Sciatic nerve (tissue), 2 donors: ENCODE measurements at regions of chr21 and their contacts with region 1.

Region 1: DNA sequence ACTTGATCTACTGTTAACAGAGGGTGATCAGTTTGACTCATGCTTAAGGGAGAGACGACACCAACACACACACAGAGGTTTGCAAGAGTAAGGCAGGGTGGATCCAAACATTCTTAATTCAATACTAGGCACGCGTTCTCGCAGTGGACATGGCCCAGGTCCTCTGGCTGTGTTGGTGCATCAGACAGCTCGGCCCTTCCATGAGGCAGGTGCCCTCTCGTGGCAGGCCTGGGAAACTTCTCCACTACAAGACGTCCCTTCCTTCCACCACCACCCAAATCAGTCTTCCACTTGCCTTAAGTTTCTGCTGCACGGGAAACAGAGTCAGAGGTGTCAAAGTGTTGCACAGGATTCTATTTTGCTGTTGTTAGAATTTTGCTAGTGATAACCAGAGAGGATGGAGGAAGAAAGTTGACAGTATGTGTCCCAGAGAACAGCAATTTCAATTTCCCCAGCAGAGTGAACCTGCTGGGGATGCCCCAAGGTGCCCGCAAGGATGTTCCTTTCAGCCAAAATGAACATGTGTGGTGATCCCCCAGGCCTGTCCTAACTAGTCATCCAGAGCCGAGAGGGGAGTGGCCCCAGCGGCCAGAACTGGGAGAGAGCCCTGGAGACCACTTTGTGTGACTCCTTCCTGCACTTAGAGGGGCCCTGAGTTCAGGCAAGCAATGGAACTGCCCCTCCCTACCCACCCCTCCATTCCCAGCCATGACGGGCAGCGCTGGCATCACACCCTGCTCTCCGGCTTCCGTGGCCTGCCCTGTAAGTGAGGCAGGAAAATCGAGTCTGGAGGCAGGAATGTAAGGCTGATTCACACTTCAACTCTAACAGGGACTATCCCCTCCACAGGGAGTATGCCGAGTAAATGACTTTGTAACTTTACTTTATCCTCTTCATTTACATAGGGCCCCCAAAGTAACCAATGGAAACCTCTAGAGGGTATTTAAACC is 34.8 kb downstream of the MX1 start:
- DNase-seq: peak; percentile 87
- ATAC-seq: peak; percentile 92

Region 2: GRCh38 chr21:41283211-41283818 is 177.5 kb before region 1 on chr21:
- intact Hi-C with region 1: loop called (anchors 10 kb)
- DNase-seq: no peak
- ATAC-seq: peak; percentile 95